Heart left ventricle (tissue), 16 donors: ENCODE measurements at regions of chr1 and their contacts with region 1.

Region 1: DNA sequence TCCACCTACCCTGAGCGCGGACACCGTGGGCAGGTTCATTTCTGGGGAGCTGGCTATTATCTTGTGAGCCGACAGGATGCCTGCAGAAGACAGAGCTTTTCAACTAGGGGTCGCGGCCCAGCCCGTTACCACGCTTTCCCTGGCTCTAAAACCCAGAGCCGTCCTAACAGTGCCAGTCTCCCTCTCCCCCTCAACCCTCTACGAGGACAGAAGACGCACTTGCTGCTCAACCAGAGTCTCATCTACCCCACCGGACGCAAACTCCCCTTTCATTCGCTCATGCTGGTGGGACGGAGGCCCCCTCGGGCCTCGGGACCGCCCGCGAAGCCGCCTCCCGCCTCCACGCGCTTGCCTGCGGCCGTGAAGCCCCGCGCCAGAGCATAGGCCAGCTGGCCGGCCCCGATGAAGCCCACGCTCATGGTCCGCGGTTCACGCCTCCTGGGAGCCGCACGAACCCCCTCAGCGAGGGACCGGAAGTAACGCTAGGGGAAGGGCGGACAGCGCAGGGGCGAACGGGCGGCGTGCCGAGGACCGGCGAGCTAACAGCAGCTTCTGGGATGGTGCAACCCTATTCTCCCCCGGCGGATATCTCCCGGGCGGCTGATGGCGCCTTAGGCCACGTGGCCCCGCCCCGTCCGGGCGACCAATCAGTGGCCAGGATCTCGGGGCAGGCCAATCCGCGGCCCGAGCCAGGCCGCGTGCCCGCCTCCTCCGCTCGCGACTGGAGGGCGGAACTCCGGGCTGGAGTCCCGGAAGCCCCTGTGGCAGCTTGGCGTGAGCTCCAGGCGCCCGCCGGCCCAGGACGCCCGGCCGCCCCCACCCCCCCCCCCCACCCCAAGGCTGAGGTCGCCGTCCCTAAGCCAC is at the start of gene PYCR2:
- DNase-seq: peak; percentile 95 to 98 (median 97)
- ATAC-seq: peak; percentile 99 to 100 (median 100)
- H3K4me3 ChIP-seq: peak within 1 kb of the TSS; percentile 52 to 96 (median 82)
- H3K27ac ChIP-seq: peak within 1 kb of the TSS; percentile 67 to 97 (median 93)
- H3K4me1 ChIP-seq: peaks cover 0 to 42% (median 19%) of the 10 kb centered on the region in 12 donors
- H3K27me3 ChIP-seq: no peaks in the 10 kb centered on the region
- CTCF ChIP-seq: peak in 2 of 12 donors; percentile 8 to 11
- POLR2A ChIP-seq: peak in 1 of 2 donors; percentile 96
- total RNA-seq, gene PYCR2: 53.6 to 82.4 (median 65.1) TPM

Region 2: DNA sequence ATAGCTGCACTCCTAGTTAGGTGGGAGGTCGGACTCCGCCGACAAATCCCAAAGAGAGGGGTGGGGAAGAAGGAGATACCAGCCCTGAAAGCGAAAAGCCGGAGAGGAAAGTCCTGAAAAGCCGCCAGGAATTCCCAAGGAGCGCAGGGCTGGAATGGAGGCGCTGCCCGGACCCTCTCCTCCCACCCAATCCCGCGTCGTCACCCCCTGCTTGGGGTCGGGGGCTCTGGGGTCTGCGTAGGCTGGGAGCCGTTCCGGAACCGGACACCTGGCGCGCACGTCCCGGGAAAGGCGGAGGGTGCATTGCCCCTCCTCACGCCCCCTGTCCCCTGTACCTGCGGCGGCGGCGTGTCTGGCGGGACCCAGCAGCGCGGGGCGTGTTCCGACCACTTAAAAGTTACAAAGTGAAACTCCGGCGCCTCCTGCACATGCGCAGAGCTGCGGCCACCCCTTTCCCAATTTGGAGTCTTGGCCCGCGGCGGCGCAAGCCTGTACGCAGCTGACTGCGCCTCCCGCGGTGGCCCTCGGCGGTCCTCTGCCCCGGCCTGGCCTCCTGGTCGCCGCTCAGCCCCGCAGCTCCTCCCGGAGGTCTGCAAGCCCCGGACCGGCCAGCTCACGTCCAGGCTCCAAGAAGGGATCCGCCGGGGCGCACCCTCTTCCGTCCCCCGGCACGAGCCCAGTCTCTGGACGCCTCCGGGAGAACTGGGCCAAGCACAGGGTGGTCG is 41.8 kb before region 1 on chr1 and contains the start of gene TMEM63A:
- intact Hi-C with region 1: loop called in 4 of 10 experiments (anchors 1 to 5 kb)
- DNase-seq: peak; percentile 94 to 98 (median 96)
- ATAC-seq: peak; percentile 85 to 93 (median 92)
- H3K4me3 ChIP-seq: peak within 1 kb of the TSS; percentile 71 to 99 (median 90)
- H3K27ac ChIP-seq: peak within 1 kb of the TSS; percentile 82 to 98 (median 90)
- H3K4me1 ChIP-seq: peaks cover 6 to 56% (median 48%) of the 10 kb centered on the region in 12 donors
- H3K27me3 ChIP-seq: no peaks in the 10 kb centered on the region
- CTCF ChIP-seq: peak in 11 of 12 donors; percentile 16 to 71 (median 50)
- POLR2A ChIP-seq: peak in 1 of 2 donors; percentile 81
- total RNA-seq, gene TMEM63A: 14.4 to 42.7 (median 25.3) TPM